ENCODE measurements at regions of chr17 and their contacts with region 1.

Region 1: DNA sequence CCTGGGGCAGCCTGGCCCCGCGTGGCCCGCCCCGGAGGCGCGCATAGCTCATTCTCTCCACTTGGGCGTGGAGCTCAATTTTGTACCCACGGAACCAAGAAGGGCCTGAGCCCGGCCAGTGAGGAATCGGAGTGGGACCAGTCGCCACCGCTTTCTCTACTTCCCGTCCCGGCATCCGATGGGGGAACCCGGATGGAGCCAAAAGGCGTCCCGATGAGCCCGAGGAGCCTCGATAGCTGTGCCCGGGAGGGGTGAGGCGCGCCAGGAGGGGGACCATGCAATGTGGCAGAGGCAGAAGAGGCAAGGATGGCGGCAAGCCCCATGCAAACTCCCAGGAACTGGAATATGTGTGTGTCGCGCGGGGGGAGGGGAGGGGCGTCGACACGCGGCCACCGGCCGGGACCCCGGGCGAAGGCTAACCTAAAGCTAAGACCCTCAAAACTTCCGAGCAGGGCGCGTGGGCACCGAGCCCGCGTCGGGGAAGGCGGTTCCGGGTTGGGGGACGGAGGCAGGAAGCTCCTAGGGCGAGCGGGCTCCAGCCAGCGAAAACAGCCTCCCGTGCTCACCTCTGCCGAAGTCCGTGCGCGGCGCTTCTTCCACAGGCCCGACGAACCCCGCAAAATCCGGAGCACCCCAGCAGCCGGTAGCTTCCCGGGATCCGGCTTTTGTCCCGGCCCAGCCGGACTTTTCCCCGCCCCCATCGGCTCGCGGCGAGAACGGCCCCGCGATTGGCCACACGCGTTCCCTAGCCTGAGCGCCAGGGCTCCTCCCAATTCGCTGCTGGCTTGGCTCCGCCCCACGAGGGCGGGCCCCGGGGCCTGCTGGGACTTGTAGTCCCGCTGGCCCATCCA is at the start of gene ACLY:
- DNase-seq: peak; percentile 98
- ATAC-seq: peak; percentile 99
- H3K4me3 Mint-ChIP-seq: peak within 1 kb of the TSS; percentile 90
- H3K27ac Mint-ChIP-seq: peak within 1 kb of the TSS; percentile 80
- H3K4me1 Mint-ChIP-seq: peaks cover 37% of the 10 kb centered on the region
- H3K27me3 Mint-ChIP-seq: no peaks in the 10 kb centered on the region
- total RNA-seq, gene ACLY: 189 to 192 TPM

Region 2: GRCh38 chr17:40818733-40819527 is 1099.6 kb before region 1 on chr17:
- CTCF ChIA-PET with region 1: no interaction called
- POLR2A ChIA-PET with region 1: no interaction called
- intact Hi-C with region 1: loop called in 1 of 2 experiments (anchors 5 kb)
- DNase-seq: peak; percentile 91
- ATAC-seq: peak; percentile 84
- H3K4me3 Mint-ChIP-seq: peak overlapping the region; percentile 95
- H3K27ac Mint-ChIP-seq: peak overlapping the region; percentile 97
- H3K4me1 Mint-ChIP-seq: peaks cover 25% of the 10 kb centered on the region
- H3K27me3 Mint-ChIP-seq: peaks cover 1% of the 10 kb centered on the region

Region 3: DNA sequence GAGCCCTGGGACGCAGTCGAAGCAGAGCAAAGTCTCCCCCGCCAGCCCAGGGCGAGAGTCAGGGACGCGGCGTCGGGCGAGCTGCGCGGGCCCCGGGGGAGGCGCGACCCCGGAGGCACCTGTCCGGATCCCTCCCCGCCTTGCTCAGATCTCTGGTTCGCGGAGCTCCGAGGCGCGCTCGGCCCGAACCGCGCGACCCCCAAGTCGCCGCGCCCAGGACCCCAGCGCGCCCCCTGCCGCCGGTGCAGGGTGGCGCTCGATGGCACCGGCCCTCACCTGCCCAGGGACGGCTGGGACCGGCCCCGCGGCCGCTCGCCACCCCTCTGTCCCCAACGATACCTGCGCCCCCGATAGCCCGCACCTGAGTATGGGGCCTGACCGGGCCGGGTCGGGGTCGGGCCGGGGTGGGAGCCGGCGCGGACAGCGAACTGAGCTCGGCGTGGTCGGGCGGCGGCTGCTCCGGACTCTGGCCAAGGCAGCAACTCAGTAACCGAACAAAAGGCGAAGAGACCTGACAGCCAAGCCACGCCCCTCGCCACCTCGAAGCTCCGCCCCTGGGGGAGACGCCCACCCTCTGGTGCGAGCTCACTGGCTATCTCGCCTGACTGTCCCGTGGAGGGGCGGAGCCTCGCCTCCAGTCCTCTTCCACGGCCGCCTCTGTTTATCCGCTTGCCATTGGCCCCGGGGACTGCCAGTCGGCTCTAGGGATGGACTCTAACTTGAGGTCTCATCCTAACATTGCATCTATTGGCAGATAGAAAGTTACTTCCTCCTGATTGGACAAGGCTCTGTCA is 132.1 kb before region 1 on chr17 and contains the start of gene JUP:
- CTCF ChIA-PET with region 1: no interaction called
- POLR2A ChIA-PET with region 1: interaction called, 3 read pairs
- intact Hi-C with region 1: loop called in 1 of 2 experiments (anchors 1 kb)
- DNase-seq: peak; percentile 96
- ATAC-seq: peak; percentile 99
- H3K4me3 Mint-ChIP-seq: peak within 1 kb of the TSS; percentile 44
- H3K27ac Mint-ChIP-seq: no peak within 1 kb of the TSS
- H3K4me1 Mint-ChIP-seq: peaks cover 17% of the 10 kb centered on the region
- H3K27me3 Mint-ChIP-seq: peaks cover 22% of the 10 kb centered on the region
- total RNA-seq, gene JUP: 0.34 to 0.54 TPM

Region 4: GRCh38 chr17:41930009-41930832 is 11.7 kb after region 1 on chr17 and contains the start of gene ODAD4:
- CTCF ChIA-PET with region 1: interaction called, 25 read pairs
- POLR2A ChIA-PET with region 1: interaction called, 14 read pairs
- intact Hi-C with region 1: loop called (anchors 1 kb)
- DNase-seq: peak; percentile 98
- ATAC-seq: peak; percentile 99
- H3K4me3 Mint-ChIP-seq: peak within 1 kb of the TSS; percentile 96
- H3K27ac Mint-ChIP-seq: peak within 1 kb of the TSS; percentile 98
- H3K4me1 Mint-ChIP-seq: peaks cover 21% of the 10 kb centered on the region
- H3K27me3 Mint-ChIP-seq: no peaks in the 10 kb centered on the region
- total RNA-seq, gene ODAD4: 0.81 to 1.1 TPM

Region 5: GRCh38 chr17:41972571-41973411 is 54.3 kb after region 1 on chr17:
- CTCF ChIA-PET with region 1: no interaction called
- POLR2A ChIA-PET with region 1: no interaction called
- intact Hi-C with region 1: no loop called
- DNase-seq: no peak
- ATAC-seq: no peak
- H3K4me3 Mint-ChIP-seq: no peak overlapping the region
- H3K27ac Mint-ChIP-seq: no peak overlapping the region
- H3K4me1 Mint-ChIP-seq: peaks cover 19% of the 10 kb centered on the region
- H3K27me3 Mint-ChIP-seq: no peaks in the 10 kb centered on the region

Region 6: GRCh38 chr17:42097691-42098631 is 179.4 kb after region 1 on chr17 and contains the start of gene ZNF385C:
- CTCF ChIA-PET with region 1: no interaction called
- POLR2A ChIA-PET with region 1: no interaction called
- intact Hi-C with region 1: no loop called
- DNase-seq: peak; percentile 66
- ATAC-seq: peak; percentile 72
- H3K4me3 Mint-ChIP-seq: no peak within 1 kb of the TSS
- H3K27ac Mint-ChIP-seq: peak within 1 kb of the TSS; percentile 31
- H3K4me1 Mint-ChIP-seq: peaks cover 8% of the 10 kb centered on the region
- H3K27me3 Mint-ChIP-seq: peaks cover 16% of the 10 kb centered on the region
- total RNA-seq, gene ZNF385C: 0.23 to 0.30 TPM

Region 7: DNA sequence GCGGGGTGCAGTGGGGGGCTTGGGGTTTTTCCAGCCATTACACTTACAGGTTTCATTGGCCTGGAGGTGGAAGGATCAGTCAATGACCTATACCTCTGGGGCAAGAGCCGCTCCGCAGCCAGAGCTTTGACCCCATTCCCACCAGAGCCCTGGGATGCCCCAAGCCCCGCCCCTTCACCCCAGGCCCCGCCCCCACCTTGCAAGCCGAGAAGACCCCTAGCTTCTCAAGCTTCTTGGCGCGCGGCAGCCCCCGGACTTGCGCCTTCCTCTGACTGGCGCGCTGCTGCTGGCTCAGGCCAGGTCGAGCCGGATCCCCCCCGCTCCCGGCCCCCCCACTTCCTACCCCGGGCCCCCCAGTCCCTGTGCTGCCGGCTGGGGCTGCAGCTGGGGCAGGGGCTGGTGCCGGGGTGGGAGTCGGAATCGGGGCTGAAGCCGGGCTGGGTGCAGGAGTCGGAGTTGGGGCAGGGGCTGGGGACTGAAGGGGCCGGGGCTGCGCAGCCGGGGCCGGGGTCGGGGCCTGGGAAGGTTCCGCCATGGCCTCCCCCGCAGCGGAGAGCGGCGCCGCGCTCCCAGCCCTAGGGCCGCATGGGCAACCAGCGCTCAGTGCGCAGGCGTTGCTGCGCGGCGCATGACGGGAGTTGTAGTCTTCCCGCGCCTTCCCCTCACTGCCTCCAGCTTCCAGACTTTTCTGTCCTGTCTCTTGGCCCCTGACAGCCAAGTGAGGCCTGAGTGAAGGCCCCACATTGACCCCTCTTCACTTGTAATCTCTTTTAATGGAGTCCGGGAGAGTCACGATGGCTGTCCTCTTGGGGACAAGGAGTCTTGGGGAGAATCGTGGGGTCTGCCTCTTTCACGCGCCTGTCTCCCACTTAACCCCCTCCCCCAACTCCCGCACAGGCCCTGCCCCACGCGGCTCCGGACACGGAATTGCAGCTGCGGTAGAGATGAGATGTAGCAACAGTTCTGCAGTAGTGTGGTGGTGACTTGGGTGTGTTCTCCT is 202.5 kb after region 1 on chr17 and contains the start of gene KAT2A:
- CTCF ChIA-PET with region 1: no interaction called
- POLR2A ChIA-PET with region 1: no interaction called
- intact Hi-C with region 1: loop called in 1 of 2 experiments (anchors 1 kb)
- DNase-seq: peak; percentile 90
- ATAC-seq: peak; percentile 93
- H3K4me3 Mint-ChIP-seq: peak within 1 kb of the TSS; percentile 70
- H3K27ac Mint-ChIP-seq: peak within 1 kb of the TSS; percentile 76
- H3K4me1 Mint-ChIP-seq: peaks cover 29% of the 10 kb centered on the region
- H3K27me3 Mint-ChIP-seq: no peaks in the 10 kb centered on the region
- total RNA-seq, gene KAT2A: 46.2 to 54.8 TPM